T47D (cell line): ENCODE measurements at regions of chr17 and their contacts with region 1.

Region 1: DNA sequence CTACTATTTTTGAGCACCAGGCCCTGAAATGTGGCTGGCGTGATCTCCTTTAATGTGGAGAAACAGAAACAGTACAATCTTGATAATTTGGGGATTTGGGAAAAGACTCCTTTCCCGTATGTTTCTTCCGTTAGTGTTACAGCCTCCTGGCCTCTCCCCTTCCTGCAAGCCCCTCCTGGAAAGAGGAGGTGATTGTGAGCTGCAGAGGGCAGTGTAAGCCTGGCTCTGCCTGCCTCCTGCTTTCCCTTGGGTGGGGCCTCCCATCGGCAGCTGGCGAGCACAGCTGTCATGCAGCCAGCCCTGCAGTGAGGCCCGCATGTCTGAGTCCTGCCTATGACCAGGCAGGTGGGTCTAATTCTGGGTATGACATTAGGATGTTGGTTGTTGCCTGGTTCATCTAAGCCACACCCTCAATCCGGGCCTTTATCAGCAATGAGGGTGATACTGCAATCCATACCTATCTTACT is 48.7 kb upstream of the WSB1 start:
- DNase-seq: peak; percentile 58 to 84

Region 2: DNA sequence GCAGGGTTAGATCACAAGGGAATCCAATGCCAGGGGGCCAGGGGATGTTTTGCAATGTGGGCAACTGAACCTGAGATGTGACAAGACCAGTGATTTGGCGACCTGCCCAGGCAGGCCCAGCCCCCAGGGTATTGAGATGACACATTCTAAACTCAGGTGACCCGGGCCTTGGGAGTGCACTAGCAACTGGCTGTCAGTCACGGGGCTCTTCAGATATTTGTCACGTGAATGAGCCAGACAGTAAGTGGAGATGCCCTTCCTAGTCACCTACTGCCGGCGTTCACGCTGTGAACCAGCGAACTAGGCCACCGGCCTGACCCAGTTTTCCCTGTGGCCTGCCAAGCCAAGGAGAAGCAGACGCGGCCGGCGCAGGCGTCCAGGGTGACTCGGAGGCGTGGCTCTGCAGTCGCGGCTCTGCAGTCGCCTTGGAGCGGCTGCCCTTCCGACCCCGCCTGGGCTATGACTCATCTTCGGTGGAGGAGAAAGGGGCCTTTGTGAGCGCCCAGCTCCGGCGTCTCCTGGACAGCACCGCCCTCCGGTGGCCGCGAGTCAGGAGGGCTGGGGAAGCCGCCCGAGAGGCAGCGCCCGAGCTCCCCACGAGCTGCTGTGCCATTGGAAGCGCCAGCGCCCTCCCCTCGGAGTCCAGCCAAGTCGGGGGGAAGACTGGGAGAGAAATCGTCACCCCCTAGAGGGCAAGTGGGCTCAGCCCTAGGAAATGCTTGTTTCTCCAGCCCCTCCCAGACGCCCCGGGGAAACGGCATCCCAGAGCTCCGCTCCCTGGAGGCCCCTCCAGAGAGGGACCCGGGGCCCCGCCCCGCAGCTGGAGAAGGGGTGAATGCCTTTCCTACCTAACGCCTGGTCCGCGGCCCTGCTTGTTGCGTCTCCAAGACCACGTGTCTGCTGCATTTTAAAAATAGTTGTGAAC is 87.5 kb after region 1 on chr17:
- in situ Hi-C with region 1: loop called (anchors 25 kb)
- DNase-seq: peak; percentile 90 to 99

Region 3: DNA sequence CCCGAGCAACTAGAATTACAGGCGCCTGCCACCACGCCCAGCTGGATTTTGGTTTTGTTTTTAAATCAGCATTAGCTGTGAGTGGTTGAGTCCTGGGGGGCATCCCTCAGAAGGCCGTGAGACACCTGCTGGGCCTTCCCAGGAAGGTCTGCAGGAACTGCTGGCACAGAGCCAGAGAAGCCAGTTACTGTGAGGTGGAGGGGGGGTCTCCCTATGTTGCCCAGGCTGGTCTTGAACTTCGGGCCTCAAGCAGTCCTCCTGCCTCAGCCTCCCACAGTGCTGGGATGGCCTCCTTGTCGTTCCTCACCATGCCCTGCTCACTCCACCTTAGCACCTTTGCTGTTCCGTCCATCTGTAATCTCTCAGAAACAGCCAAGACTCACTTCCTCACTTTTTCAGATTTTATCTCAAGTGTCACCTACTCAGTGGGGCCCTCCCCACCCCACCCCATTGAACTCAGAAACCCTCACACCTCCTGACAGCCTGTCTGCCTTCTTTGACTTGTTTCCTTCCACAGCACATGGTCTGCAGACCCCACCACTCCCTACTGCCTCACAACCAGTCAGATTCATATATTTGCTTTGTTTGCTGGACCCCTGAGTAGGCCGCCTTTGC is 110.9 kb after region 1 on chr17:
- in situ Hi-C with region 1: no loop called
- DNase-seq: no peak

Region 4: GRCh38 chr17:27381007-27381501 is 135.8 kb after region 1 on chr17:
- in situ Hi-C with region 1: no loop called
- DNase-seq: peak; percentile 47 to 88